Activated T-helper 1 cell treated with anti-CD3 and anti-CD28 coated beads, Interleukin-12 subunit alpha, Interleukin-12 subunit beta, Interleukin-2, Interleukin-4 antibody, amounts not matched to agents 30 ng/mL and 10 ng/mL and 1 ng/mL, durations not matched to agents 14 hours and 24 hours and 36 hours (primary cell): ENCODE measurements at regions of chr9 and their contacts with region 1.

Region 1: GRCh38 chr9:89410641-89411350 is 87.1 kb downstream of the SEMA4D start:
- DNase-seq: peak; percentile 47
- H3K4me3 Mint-ChIP-seq: peak overlapping the region; percentile 75
- H3K27ac Mint-ChIP-seq: peak overlapping the region; percentile 96
- H3K4me1 Mint-ChIP-seq: peaks cover 100% of the 10 kb centered on the region
- H3K27me3 Mint-ChIP-seq: no peaks in the 10 kb centered on the region

Region 2: GRCh38 chr9:89375191-89375760 is 35.5 kb before region 1 on chr9:
- intact Hi-C with region 1: loop called (anchors 2 kb)
- DNase-seq: peak; percentile 29
- H3K4me3 Mint-ChIP-seq: no peak overlapping the region
- H3K27ac Mint-ChIP-seq: peak overlapping the region; percentile 88
- H3K4me1 Mint-ChIP-seq: peaks cover 47% of the 10 kb centered on the region
- H3K27me3 Mint-ChIP-seq: no peaks in the 10 kb centered on the region

Region 3: GRCh38 chr9:89437000-89437631 is 26.3 kb after region 1 on chr9:
- intact Hi-C with region 1: no loop called
- DNase-seq: no peak
- H3K4me3 Mint-ChIP-seq: peak overlapping the region; percentile 15
- H3K27ac Mint-ChIP-seq: peak overlapping the region; percentile 80
- H3K4me1 Mint-ChIP-seq: peaks cover 78% of the 10 kb centered on the region
- H3K27me3 Mint-ChIP-seq: no peaks in the 10 kb centered on the region

Region 4: DNA sequence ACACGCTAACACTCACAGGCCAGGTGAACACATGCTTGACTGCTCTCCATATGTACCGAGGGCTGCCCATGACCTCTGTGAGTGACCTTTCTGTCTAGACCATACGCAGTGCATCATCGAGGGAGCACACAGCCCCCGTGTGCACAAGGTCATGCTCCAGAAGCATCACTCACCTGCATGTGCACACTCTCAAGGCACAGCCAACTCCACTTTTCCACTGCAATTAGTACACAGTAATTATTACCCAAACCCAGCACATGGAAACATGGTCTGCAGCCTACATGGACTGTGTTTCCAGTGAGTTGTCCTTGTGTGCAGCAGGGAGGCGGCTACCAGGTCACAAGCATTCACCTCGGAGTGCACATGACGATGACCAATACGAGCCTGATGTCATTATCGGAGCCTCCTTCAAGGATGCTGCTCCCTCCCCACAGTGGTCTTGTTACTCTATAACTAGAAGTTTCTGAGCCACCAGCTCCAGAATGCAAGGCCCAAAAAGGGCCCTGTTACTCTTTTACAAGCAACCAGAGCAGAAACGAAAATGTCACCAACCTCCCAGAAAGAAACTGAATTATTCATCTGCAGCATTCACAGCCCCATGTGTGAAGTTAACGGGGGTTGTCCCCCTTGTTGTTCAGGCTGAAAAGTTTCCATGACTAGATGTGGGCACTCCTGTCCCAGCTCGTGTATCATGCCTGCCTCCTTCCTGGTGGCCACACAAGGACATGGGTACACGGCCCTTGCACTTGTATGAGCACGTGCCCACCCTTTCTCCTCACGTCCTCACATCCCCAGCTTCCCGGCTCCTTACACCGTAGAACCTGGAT is 55.9 kb after region 1 on chr9:
- intact Hi-C with region 1: loop called (anchors 1 kb)
- DNase-seq: peak; percentile 44
- H3K4me3 Mint-ChIP-seq: peak overlapping the region; percentile 73
- H3K27ac Mint-ChIP-seq: peak overlapping the region; percentile 98
- H3K4me1 Mint-ChIP-seq: peaks cover 93% of the 10 kb centered on the region
- H3K27me3 Mint-ChIP-seq: no peaks in the 10 kb centered on the region

Region 5: DNA sequence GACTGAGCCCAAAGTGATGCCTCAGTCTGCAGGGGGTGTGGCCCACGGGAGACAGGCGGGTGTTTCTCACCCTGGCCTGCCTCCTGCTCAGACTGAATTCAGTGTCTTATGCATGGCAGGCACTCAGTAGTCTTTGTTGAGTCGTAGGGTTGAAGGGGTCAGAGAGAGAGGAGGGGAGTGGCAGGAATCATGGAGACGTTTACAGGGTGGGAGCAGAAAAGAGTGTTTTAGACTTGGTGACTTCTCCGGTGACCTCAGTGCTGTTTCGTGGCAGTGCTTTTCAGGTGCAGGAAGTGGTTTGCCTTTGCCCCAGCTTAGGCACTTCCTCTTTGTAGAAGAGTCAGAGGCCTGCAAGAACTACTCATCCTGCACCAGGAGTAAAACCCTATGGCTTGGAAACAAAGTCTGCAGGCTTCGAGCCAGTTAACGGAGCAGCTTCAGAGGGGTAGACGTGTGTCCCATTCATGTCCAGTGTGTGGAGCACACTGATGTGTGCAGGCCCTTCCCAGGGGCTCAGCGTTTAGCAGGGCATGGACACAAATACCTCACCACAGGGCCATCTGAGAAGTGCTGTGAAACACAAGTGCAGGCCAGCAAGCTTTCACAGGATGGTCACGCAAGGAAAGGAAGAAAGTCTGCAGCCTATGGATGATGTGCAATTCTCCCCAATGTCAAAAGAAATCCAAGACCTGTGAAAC is 111.6 kb after region 1 on chr9:
- intact Hi-C with region 1: loop called (anchors 1 kb)
- DNase-seq: peak; percentile 77
- H3K4me3 Mint-ChIP-seq: peak overlapping the region; percentile 81
- H3K27ac Mint-ChIP-seq: peak overlapping the region; percentile 99
- H3K4me1 Mint-ChIP-seq: peaks cover 91% of the 10 kb centered on the region
- H3K27me3 Mint-ChIP-seq: no peaks in the 10 kb centered on the region

Region 6: GRCh38 chr9:89549031-89549644 is 138.3 kb after region 1 on chr9:
- intact Hi-C with region 1: loop called (anchors 1 kb)
- DNase-seq: peak; percentile 73
- H3K4me3 Mint-ChIP-seq: no peak overlapping the region
- H3K27ac Mint-ChIP-seq: peak overlapping the region; percentile 29
- H3K4me1 Mint-ChIP-seq: peaks cover 30% of the 10 kb centered on the region
- H3K27me3 Mint-ChIP-seq: peaks cover 15% of the 10 kb centered on the region